ENCODE measurements at regions of chr10 and their contacts with region 1.

Region 1: DNA sequence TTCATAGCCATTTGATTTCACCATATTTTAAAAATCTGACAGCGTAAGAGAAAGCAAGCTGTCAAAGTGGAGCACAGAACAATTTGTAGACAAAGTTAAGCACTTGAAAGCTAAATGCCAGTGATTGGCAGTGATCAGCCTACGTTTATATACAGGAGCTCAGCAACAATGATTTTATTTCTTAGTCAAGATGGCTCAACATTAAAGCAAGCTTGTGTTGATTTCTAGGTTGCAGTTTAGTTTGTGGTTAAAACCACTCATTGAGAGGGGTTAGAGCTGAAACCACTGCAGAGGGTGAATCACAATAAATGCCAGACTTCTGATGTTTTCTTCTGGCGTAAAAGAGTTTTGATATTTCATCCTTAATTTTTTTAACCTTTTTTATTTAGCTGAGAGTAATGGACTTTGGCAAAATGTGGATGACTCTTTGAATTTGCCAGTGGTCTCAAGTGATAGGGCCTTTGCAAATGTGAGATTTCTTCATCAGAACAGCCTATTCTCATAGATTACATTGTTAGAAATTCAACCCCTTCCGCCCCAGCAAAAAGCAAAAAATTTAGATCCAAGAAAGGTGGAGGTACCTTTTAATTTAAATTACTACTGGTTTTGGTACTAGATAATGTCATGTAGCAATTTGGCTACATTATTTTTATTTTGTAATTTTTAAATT is 73.8 kb downstream of the SHOC2 start:
- DNase-seq: no peak
- H3K4me3 Mint-ChIP-seq: peak overlapping the region; percentile 39
- H3K27ac Mint-ChIP-seq: no peak overlapping the region
- H3K4me1 Mint-ChIP-seq: peaks cover 32% of the 10 kb centered on the region
- H3K27me3 Mint-ChIP-seq: peaks cover 21% of the 10 kb centered on the region

Region 2: GRCh38 chr10:110746254-110746826 is 246.8 kb before region 1 on chr10:
- intact Hi-C with region 1: loop called (anchors 5 kb)
- DNase-seq: peak; percentile 27
- H3K4me3 Mint-ChIP-seq: no peak overlapping the region
- H3K27ac Mint-ChIP-seq: no peak overlapping the region
- H3K4me1 Mint-ChIP-seq: peaks cover 43% of the 10 kb centered on the region
- H3K27me3 Mint-ChIP-seq: no peaks in the 10 kb centered on the region

Region 3: GRCh38 chr10:110783509-110784107 is 209.6 kb before region 1 on chr10:
- intact Hi-C with region 1: no loop called
- DNase-seq: peak; percentile 54
- H3K4me3 Mint-ChIP-seq: no peak overlapping the region
- H3K27ac Mint-ChIP-seq: peak overlapping the region; percentile 84
- H3K4me1 Mint-ChIP-seq: peaks cover 44% of the 10 kb centered on the region
- H3K27me3 Mint-ChIP-seq: no peaks in the 10 kb centered on the region

Region 4: DNA sequence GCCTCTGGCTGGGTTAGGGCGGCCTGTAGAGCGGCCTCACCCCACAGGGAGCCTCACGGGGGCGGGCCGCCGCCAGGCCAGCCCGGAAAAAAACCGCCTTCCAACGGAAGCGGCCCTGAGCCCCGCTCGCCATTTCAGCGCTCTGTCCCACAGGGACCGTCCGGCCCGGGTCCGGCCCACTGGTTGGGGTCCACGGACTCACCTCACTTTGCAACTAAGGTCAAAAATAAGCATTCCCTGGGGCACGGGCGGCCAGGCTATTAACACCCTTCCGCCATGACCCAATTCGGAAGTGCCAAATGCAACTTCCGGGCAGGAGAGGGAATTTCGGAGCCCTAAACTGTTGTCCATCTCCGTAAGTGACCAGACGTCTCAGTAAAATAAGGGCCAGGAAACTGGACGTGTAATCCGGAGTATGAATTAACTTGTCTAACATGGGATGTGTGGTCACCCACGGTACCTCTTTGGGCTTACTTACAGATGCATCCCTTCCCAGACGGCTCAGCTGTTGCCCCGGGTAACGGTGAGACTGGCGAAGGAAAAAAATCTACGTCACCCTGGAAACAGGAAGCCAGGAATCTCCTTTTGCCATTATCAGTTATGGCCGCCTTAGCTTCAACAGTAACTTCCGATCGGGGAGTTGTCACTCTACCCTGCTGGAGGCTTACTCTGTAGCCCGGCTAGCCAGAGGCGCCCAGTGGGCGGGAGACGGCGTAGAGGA is 74.4 kb before region 1 on chr10 and contains the start of gene BBIP1:
- intact Hi-C with region 1: loop called (anchors 1 kb)
- DNase-seq: no peak
- H3K4me3 Mint-ChIP-seq: peak within 1 kb of the TSS; percentile 94
- H3K27ac Mint-ChIP-seq: peak within 1 kb of the TSS; percentile 93
- H3K4me1 Mint-ChIP-seq: peaks cover 39% of the 10 kb centered on the region
- H3K27me3 Mint-ChIP-seq: no peaks in the 10 kb centered on the region
- total RNA-seq, gene BBIP1: 31.5 and 32.7 TPM in 2 replicates

Region 5: DNA sequence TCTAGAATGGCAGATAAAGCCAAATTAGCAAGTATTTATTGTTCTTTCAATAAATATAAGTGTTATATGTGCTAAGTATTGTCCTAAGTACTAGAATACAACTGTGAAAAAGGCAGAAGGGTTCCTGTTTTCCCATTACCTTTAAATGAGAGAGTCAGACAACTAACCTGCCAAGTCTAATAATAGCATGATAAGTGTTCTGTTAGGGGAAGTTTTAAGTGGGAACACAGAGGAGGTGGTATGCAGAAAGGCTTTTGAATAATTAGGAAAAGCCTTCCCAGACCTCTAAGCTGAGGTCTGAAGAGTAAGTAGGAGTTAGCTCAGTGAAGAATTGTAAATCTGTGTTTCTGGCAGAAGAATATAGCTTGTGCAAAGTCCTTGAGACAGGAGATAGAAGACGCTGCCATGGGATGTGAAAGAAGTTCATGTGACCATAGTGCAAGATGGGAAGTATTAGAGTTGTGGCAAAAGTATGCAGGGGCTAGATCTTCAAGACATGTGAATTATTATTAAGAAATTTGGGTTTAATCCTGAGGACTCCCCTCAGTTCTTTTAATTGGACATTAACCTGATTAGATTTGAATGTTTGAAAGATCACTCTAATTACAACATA is 61.3 kb before region 1 on chr10:
- intact Hi-C with region 1: no loop called
- DNase-seq: no peak
- H3K4me3 Mint-ChIP-seq: no peak overlapping the region
- H3K27ac Mint-ChIP-seq: no peak overlapping the region
- H3K4me1 Mint-ChIP-seq: peaks cover 7% of the 10 kb centered on the region
- H3K27me3 Mint-ChIP-seq: no peaks in the 10 kb centered on the region

Region 6: DNA sequence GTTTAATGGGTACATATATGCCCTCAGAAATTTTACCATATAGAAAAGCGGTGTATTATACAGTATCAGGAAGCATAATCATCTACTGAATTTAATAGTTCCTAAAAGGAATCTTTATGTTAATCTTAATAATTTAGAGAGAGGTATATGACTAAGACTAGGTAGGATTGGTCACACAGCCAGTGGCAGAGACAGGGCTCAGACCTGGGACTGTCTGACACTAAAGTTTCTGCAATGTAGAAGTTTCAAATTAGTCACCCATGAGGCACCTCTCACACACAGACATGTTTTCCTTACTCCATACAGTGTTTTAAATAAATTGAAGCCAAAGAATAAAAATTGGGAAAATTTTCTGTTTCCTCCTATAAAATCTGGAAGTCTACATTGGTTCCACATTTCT is 10.9 kb after region 1 on chr10:
- intact Hi-C with region 1: no loop called
- DNase-seq: no peak
- H3K4me3 Mint-ChIP-seq: no peak overlapping the region
- H3K27ac Mint-ChIP-seq: no peak overlapping the region
- H3K4me1 Mint-ChIP-seq: no peaks in the 10 kb centered on the region
- H3K27me3 Mint-ChIP-seq: no peaks in the 10 kb centered on the region

Region 7: GRCh38 chr10:111093741-111094380 is 100.7 kb after region 1 on chr10:
- intact Hi-C with region 1: no loop called
- DNase-seq: no peak
- H3K4me3 Mint-ChIP-seq: no peak overlapping the region
- H3K27ac Mint-ChIP-seq: no peak overlapping the region
- H3K4me1 Mint-ChIP-seq: peaks cover 1% of the 10 kb centered on the region
- H3K27me3 Mint-ChIP-seq: peaks cover 10% of the 10 kb centered on the region